PC-9 (cell line): ENCODE measurements at regions of chr1 and their contacts with region 1.

Region 1: GRCh38 chr1:22831729-22832413 is 121.2 kb downstream of the EPHB2 start:
- DNase-seq: peak; percentile 87 to 94
- H3K4me3 ChIP-seq: no peak overlapping the region
- H3K27ac ChIP-seq: peak overlapping the region; percentile 91
- H3K4me1 ChIP-seq: peaks cover 80% of the 10 kb centered on the region
- H3K27me3 ChIP-seq: no peaks in the 10 kb centered on the region
- CTCF ChIP-seq: no peak

Region 2: GRCh38 chr1:21503706-21504377 is 1328.0 kb before region 1 on chr1:
- CTCF ChIA-PET with region 1: no interaction called
- POLR2A ChIA-PET with region 1: no interaction called
- intact Hi-C with region 1: no loop called
- DNase-seq: no peak
- H3K4me3 ChIP-seq: no peak overlapping the region
- H3K27ac ChIP-seq: no peak overlapping the region
- H3K4me1 ChIP-seq: no peaks in the 10 kb centered on the region
- H3K27me3 ChIP-seq: no peaks in the 10 kb centered on the region
- CTCF ChIP-seq: no peak

Region 3: DNA sequence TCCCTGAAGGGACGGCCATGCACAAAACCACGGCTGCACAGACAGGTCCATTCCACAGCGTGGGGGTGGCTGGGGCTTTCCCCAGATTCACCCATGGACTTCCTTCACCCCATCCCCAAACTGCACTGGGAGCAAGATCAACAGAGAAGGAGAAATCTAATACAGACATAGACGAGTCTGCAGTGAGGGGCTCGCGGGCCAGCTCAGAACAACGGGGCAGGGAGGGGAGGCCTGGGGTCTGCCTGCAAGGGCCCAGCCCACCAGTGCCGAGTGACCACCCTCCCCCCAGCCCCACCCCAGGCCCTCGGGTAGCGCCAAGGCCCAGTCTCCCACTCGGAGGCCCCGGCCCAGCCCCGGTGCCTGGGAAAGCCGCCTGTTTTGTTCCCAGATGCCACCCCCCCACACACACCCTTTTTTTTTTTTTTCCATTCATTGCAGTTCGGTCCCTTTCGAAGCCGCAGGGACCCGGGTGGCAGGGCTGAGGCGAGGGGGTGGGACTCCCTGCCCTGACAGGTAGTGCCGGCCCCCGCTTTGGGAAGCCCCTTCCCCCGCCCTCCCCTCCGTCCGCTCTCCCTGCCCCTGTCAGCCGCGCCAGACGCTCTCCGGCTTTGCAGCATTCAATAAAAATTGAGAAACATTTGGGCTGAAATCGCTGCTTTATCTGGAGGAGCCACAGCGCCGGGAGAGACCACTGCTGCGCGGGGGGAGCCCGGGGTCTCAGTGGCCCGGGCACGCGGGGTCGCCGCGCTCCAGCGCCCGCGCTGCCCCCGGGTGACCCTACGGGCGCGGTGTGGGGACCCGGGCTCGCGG is 121.8 kb before region 1 on chr1:
- CTCF ChIA-PET with region 1: no interaction called
- POLR2A ChIA-PET with region 1: interaction called, 19 read pairs
- intact Hi-C with region 1: no loop called
- DNase-seq: peak in 1 of 2 experiments; percentile 64
- H3K4me3 ChIP-seq: peak overlapping the region; percentile 57; the same call in 1 of the 2 replicates
- H3K27ac ChIP-seq: no peak overlapping the region
- H3K4me1 ChIP-seq: 0 out of 2 replicates have a peak, but pooled peaks cover 5% of the 10 kb centered on the region
- H3K27me3 ChIP-seq: no peaks in the 10 kb centered on the region
- CTCF ChIP-seq: no peak

Region 4: GRCh38 chr1:22717037-22717760 is 114.7 kb before region 1 on chr1:
- CTCF ChIA-PET with region 1: interaction called, 17 read pairs
- POLR2A ChIA-PET with region 1: interaction called, 19 read pairs
- intact Hi-C with region 1: no loop called
- DNase-seq: peak in 1 of 2 experiments; percentile 46
- H3K4me3 ChIP-seq: no peak overlapping the region
- H3K27ac ChIP-seq: no peak overlapping the region
- H3K4me1 ChIP-seq: peaks cover 7% of the 10 kb centered on the region; the same call in 1 of the 2 replicates
- H3K27me3 ChIP-seq: no peaks in the 10 kb centered on the region
- CTCF ChIP-seq: no peak

Region 5: GRCh38 chr1:22749919-22750688 is 81.8 kb before region 1 on chr1:
- CTCF ChIA-PET with region 1: no interaction called
- POLR2A ChIA-PET with region 1: no interaction called
- intact Hi-C with region 1: loop called (anchors 1 kb)
- DNase-seq: peak; percentile 50 to 88
- H3K4me3 ChIP-seq: no peak overlapping the region
- H3K27ac ChIP-seq: peak overlapping the region; percentile 89
- H3K4me1 ChIP-seq: peaks cover 63% of the 10 kb centered on the region
- H3K27me3 ChIP-seq: no peaks in the 10 kb centered on the region
- CTCF ChIP-seq: no peak

Region 6: GRCh38 chr1:22794647-22795365 is 37.1 kb before region 1 on chr1:
- CTCF ChIA-PET with region 1: no interaction called
- POLR2A ChIA-PET with region 1: no interaction called
- intact Hi-C with region 1: loop called (anchors 2 kb)
- DNase-seq: no peak
- H3K4me3 ChIP-seq: no peak overlapping the region
- H3K27ac ChIP-seq: no peak overlapping the region
- H3K4me1 ChIP-seq: no peaks in the 10 kb centered on the region
- H3K27me3 ChIP-seq: no peaks in the 10 kb centered on the region
- CTCF ChIP-seq: no peak

Region 7: GRCh38 chr1:22804406-22804805 is 27.5 kb before region 1 on chr1:
- CTCF ChIA-PET with region 1: interaction called, 3 read pairs
- POLR2A ChIA-PET with region 1: no interaction called
- intact Hi-C with region 1: loop called (anchors 2 kb)
- DNase-seq: no peak
- H3K4me3 ChIP-seq: no peak overlapping the region
- H3K27ac ChIP-seq: no peak overlapping the region
- H3K4me1 ChIP-seq: peaks cover 14% of the 10 kb centered on the region
- H3K27me3 ChIP-seq: no peaks in the 10 kb centered on the region
- CTCF ChIP-seq: no peak